B cell (primary cell): ENCODE measurements at regions of chr6 and their contacts with region 1.

Region 1: GRCh38 chr6:33929575-33930288 is 125.9 kb upstream of the MLN start:
- DNase-seq: no peak
- ATAC-seq: no peak
- H3K4me3 ChIP-seq: no peak overlapping the region
- H3K4me3 Mint-ChIP-seq: no peak overlapping the region
- H3K27ac ChIP-seq: no peak overlapping the region
- H3K27ac Mint-ChIP-seq: no peak overlapping the region
- H3K4me1 ChIP-seq: no peaks in the 10 kb centered on the region
- H3K4me1 Mint-ChIP-seq: peaks cover 7% of the 10 kb centered on the region
- H3K27me3 ChIP-seq: no peaks in the 10 kb centered on the region
- H3K27me3 Mint-ChIP-seq: peaks cover 15% of the 10 kb centered on the region
- CTCF ChIP-seq: no peak

Region 2: GRCh38 chr6:33885124-33886057 is 44.3 kb before region 1 on chr6:
- CTCF ChIA-PET with region 1: no interaction called
- POLR2A ChIA-PET with region 1: no interaction called
- intact Hi-C with region 1: no loop called
- DNase-seq: no peak
- ATAC-seq: no peak
- H3K4me3 ChIP-seq: no peak overlapping the region
- H3K4me3 Mint-ChIP-seq: no peak overlapping the region
- H3K27ac ChIP-seq: no peak overlapping the region
- H3K27ac Mint-ChIP-seq: no peak overlapping the region
- H3K4me1 ChIP-seq: no peaks in the 10 kb centered on the region
- H3K4me1 Mint-ChIP-seq: no peaks in the 10 kb centered on the region
- H3K27me3 ChIP-seq: peaks cover 0 to 5% (median 0%) of the 10 kb centered on the region in 4 experiments
- H3K27me3 Mint-ChIP-seq: peaks cover 30% of the 10 kb centered on the region
- CTCF ChIP-seq: no peak

Region 3: GRCh38 chr6:34055223-34055933 is 125.6 kb after region 1 on chr6:
- CTCF ChIA-PET with region 1: no interaction called
- POLR2A ChIA-PET with region 1: no interaction called
- intact Hi-C with region 1: no loop called
- DNase-seq: peak; percentile 76
- ATAC-seq: peak; percentile 73
- H3K4me3 ChIP-seq: no peak overlapping the region
- H3K4me3 Mint-ChIP-seq: no peak overlapping the region
- H3K27ac ChIP-seq: no peak overlapping the region
- H3K27ac Mint-ChIP-seq: no peak overlapping the region
- H3K4me1 ChIP-seq: no peaks in the 10 kb centered on the region
- H3K4me1 Mint-ChIP-seq: no peaks in the 10 kb centered on the region
- H3K27me3 ChIP-seq: peaks cover 0 to 11% (median 1%) of the 10 kb centered on the region in 4 experiments
- H3K27me3 Mint-ChIP-seq: peaks cover 26% of the 10 kb centered on the region
- CTCF ChIP-seq: peak; percentile 86

Region 4: GRCh38 chr6:34447910-34448309 is 518.2 kb after region 1 on chr6:
- CTCF ChIA-PET with region 1: no interaction called
- POLR2A ChIA-PET with region 1: no interaction called
- intact Hi-C with region 1: loop called (anchors 5 kb)
- DNase-seq: no peak
- ATAC-seq: no peak
- H3K4me3 ChIP-seq: no peak overlapping the region
- H3K4me3 Mint-ChIP-seq: no peak overlapping the region
- H3K27ac ChIP-seq: no peak overlapping the region
- H3K27ac Mint-ChIP-seq: no peak overlapping the region
- H3K4me1 ChIP-seq: no peaks in the 10 kb centered on the region
- H3K4me1 Mint-ChIP-seq: no peaks in the 10 kb centered on the region
- H3K27me3 ChIP-seq: no peaks in the 10 kb centered on the region
- H3K27me3 Mint-ChIP-seq: no peaks in the 10 kb centered on the region
- CTCF ChIP-seq: no peak